Activated CD4-positive, alpha-beta T cell treated with anti-CD3 and anti-CD28 coated beads, Interleukin-2, amount 10 ng/mL, durations not matched to agents 24 days and 14 days (primary cell): ENCODE measurements at regions of chr10 and their contacts with region 1.

Region 1: DNA sequence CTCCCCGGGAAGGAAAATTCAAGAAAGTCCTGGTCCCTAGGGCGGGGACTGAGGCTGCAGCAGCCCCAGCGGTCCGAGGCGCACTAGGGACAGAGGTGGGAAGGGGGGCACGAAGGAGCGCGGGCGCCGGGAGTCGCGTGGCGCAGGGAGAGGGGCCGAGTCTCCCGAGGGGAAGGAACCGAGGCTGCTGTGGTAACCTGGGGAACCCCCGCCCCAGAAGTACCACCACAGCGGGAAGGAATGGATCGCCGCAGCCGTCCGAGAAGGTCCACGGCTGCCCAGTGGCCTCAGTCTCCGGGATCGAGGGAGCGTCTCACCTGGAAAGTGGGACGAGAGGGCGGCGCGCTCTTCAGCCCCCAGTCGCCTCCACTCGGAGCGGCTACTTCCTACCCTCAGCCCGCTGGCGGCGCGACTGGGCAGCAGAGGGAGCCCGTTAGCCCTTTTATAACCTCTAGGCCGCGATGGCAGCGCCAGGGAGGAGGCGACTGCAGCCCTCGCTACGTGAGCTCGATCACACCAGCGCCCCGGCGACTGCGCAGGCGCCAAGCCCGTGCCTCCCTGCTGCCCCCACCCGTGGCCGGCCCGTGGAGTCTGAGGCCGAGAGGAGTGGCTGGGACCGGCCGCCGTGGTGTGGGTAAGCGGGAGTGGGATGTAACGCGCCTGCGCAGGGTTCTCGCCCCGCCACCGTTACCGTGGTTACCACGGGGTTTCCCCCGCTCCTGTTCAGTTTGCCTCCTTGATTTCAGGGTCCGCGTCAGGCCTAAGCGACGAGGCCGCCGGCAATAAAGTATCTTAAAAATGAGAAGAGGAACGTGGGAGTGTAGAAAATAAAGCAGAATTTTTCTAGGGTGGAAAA is at the start of gene P4HA1:
- DNase-seq: peak; percentile 99
- H3K4me3 Mint-ChIP-seq: peak within 1 kb of the TSS; percentile 93
- H3K27ac Mint-ChIP-seq: peak within 1 kb of the TSS; percentile 99
- H3K4me1 Mint-ChIP-seq: peaks cover 30% of the 10 kb centered on the region
- H3K27me3 Mint-ChIP-seq: no peaks in the 10 kb centered on the region
- total RNA-seq, gene P4HA1: 69.4 and 71.1 TPM in 2 replicates

Region 2: DNA sequence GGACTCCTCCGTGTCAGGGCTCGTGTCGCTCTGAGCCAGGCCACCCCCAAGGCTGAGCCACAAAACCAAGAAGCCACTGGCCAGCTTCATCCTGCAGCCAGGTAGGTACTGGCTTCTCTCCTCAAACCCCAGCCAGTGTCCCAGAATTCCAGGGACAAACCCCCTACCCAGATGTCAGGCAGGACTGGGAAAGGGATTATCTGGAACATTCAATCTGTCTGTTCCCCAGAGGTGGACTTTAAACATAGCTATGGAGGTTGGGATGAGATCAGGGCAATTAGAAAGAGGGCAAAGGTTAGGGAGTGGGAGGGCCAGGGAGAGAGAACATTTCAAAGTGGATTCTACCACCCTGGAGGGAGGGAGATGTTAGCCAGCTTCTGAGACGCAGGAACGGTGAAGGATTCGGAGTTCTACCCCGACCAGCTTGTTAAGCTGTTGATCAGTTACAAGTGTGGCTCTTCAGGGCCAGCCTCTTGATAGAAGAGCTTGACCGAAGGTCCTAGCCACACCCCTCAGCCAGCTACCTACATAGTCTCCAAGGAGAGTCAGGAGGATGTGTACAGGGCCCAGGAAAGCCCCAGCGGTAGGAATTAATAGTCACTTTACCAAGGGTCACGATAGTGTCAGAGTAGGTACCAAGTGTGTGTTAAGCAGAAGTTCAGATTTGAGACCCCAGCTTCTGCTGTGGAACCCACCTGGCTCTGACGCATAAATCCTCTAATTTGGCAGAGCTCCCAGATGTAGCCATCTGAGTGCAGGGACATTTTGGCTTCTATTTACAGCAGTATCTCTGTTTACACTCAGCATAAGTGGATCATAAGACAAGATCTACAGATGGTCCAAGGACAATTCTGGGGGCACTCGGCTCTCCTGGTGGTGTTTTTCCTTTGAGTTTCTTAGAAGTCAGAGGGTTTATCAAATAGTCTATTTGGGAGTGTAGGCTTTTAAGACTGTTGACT is 141.8 kb before region 1 on chr10 and contains the start of gene PLA2G12B:
- intact Hi-C with region 1: no loop called
- DNase-seq: peak; percentile 45
- H3K4me3 Mint-ChIP-seq: no peak within 1 kb of the TSS
- H3K27ac Mint-ChIP-seq: no peak within 1 kb of the TSS
- H3K4me1 Mint-ChIP-seq: no peaks in the 10 kb centered on the region
- H3K27me3 Mint-ChIP-seq: peaks cover 12% of the 10 kb centered on the region
- total RNA-seq, gene PLA2G12B: not detected in 2 replicates

Region 3: GRCh38 chr10:73021050-73021449 is 75.6 kb before region 1 on chr10:
- intact Hi-C with region 1: loop called (anchors 10 kb)
- DNase-seq: no peak
- H3K4me3 Mint-ChIP-seq: no peak overlapping the region
- H3K27ac Mint-ChIP-seq: peak overlapping the region; percentile 35
- H3K4me1 Mint-ChIP-seq: peaks cover 41% of the 10 kb centered on the region
- H3K27me3 Mint-ChIP-seq: no peaks in the 10 kb centered on the region

Region 4: GRCh38 chr10:73110345-73110849 is 13.7 kb after region 1 on chr10 and contains the start of gene NUDT13:
- intact Hi-C with region 1: loop called (anchors 1 kb)
- DNase-seq: peak; percentile 86
- H3K4me3 Mint-ChIP-seq: peak within 1 kb of the TSS; percentile 78
- H3K27ac Mint-ChIP-seq: peak within 1 kb of the TSS; percentile 82
- H3K4me1 Mint-ChIP-seq: peaks cover 15% of the 10 kb centered on the region
- H3K27me3 Mint-ChIP-seq: no peaks in the 10 kb centered on the region
- total RNA-seq, gene NUDT13: 0.80 and 0.91 TPM in 2 replicates

Region 5: DNA sequence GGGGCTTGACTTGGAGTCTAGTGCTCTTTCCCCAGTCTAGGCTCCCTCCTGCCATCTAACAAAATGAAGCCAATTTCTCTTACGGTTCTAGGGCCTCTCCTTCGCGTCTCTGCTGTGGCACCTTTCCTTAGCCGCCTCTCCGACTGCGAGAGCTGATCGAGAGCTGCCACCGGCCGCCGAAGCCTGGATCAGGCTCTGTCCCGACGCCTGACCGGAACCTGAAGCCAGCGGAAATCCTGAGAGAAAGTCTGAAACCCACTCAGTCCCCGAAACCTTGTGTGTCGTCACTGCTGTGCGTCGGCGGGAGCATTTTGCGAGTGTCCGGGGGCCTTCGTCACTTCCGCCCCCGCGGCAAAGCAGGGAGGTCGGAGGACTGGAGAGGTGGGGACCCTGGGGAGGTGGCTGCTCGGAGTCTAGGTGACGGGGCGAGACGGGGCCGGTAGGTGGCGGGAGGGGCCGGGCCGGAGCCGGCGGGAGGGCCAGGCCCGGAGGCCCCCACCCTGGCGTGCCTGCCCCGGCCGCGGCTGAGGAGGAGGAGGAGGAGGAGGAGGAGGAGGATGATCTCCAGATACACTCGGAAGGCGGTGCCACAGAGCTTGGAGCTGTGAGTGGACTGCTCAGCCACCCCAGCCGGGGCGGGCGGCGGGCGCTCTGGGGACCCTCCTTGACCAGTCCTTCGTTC is 71.2 kb after region 1 on chr10 and contains the starts of genes ECD and FAM149B1:
- intact Hi-C with region 1: loop called (anchors 1 kb)
- DNase-seq: peak; percentile 98
- H3K4me3 Mint-ChIP-seq: peak within 1 kb of the TSS; percentile 97
- H3K27ac Mint-ChIP-seq: peak within 1 kb of the TSS; percentile 99
- H3K4me1 Mint-ChIP-seq: peaks cover 35% of the 10 kb centered on the region
- H3K27me3 Mint-ChIP-seq: no peaks in the 10 kb centered on the region
- total RNA-seq, gene ECD: 38.5 and 40.7 TPM in 2 replicates
- total RNA-seq, gene FAM149B1: 10.5 and 11.5 TPM in 2 replicates

Region 6: GRCh38 chr10:73413528-73414229 is 317.0 kb after region 1 on chr10 and contains the start of gene ANXA7:
- intact Hi-C with region 1: loop called (anchors 5 kb)
- DNase-seq: peak; percentile 97
- H3K4me3 Mint-ChIP-seq: peak within 1 kb of the TSS; percentile 92
- H3K27ac Mint-ChIP-seq: peak within 1 kb of the TSS; percentile 90
- H3K4me1 Mint-ChIP-seq: peaks cover 33% of the 10 kb centered on the region
- H3K27me3 Mint-ChIP-seq: no peaks in the 10 kb centered on the region
- total RNA-seq, gene ANXA7: 169 and 171 TPM in 2 replicates